Activated CD8-positive, alpha-beta T cell treated with anti-CD3 and anti-CD28 coated beads for 36 hours (primary cell): ENCODE measurements at regions of chr12 and their contacts with region 1.

Region 1: DNA sequence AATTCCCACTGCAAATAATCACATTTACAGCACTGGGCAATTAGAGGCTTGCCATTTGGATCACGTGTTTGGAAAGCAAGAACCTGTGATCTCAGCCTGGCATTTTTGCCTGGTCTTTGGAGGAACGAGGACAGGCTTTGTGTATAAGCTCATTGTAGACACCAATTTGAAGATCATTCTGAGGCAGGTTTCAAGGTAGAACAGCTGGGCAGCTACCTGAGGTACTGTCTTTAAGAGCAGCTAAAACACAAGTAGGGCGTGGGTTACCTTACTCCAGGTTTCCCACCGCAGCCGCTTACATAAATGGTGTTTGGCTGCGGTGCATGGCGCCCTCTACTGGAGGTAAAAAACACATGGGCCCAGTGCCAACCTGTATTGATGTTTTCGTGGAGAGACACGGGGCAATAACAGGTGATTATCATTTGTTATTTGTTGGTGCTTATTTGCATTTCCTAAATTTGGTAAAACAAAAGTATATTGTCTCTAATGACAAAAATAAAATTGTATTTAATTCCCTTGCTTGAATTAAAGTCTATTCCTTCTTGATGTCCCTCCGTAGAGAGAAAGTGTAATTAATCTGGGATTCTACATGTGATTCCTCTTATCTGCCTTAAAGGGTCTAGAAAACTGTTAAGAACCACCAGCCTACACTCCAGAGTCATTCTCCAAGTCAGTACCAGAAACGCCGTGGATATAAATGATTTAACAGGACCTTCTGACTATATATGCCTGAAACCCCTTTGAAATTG is 69.7 kb downstream of the SVOP start:
- DNase-seq: peak; percentile 83
- ATAC-seq: peak; percentile 90
- H3K4me3 Mint-ChIP-seq: no peak overlapping the region
- H3K27ac Mint-ChIP-seq: no peak overlapping the region
- H3K4me1 Mint-ChIP-seq: peaks cover 3% of the 10 kb centered on the region
- H3K27me3 Mint-ChIP-seq: peaks cover 4% of the 10 kb centered on the region
- CTCF ChIP-seq: peak; percentile 88

Region 2: DNA sequence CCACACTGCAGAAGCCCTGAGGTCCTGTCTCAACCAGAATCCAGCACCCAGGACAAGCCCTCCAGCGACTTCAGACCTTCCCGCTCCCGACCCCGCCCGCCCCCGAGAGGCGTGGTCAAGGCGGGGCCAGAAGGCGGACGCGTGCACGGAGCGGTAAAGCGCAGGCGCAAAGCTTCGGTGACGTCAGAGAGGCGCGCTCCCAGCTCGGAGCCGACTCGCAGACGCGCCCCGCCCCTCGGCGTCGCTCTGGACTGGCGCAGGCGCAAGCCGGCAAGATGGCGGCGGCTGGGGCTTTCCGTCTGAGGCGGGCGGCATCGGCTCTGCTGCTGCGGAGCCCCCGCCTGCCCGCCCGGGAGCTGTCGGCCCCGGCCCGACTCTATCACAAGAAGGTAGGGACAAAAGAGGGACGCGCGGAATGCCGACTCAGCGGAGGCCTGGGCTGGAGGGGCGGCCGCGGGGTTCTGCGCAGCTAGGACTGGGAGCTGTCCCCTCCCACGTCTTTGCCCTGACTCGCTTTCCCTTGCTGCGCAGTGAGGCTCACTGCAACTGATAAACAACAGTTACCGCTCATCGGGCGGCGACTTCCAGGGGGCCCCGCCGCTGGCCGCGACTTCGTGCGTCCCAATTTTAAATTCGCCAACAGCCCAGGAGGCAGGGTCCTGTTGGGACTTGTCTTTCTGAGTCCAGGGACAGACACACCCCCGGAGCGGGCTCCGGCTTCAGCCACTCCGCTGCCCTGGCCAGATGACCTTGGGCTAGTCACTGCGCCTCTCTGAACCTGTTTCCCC is 388.6 kb before region 1 on chr12 and contains the start of gene ISCU:
- CTCF ChIA-PET with region 1: interaction called, 8 read pairs
- POLR2A ChIA-PET with region 1: no interaction called
- intact Hi-C with region 1: loop called (anchors 10 kb)
- DNase-seq: peak; percentile 97
- ATAC-seq: peak; percentile 76
- H3K4me3 Mint-ChIP-seq: peak within 1 kb of the TSS; percentile 99
- H3K27ac Mint-ChIP-seq: peak within 1 kb of the TSS; percentile 100
- H3K4me1 Mint-ChIP-seq: peaks cover 55% of the 10 kb centered on the region
- H3K27me3 Mint-ChIP-seq: no peaks in the 10 kb centered on the region
- CTCF ChIP-seq: no peak
- total RNA-seq, gene ISCU: 69.4 to 70.5 TPM

Region 3: GRCh38 chr12:108773798-108774788 is 177.1 kb before region 1 on chr12:
- CTCF ChIA-PET with region 1: no interaction called
- POLR2A ChIA-PET with region 1: no interaction called
- intact Hi-C with region 1: no loop called
- DNase-seq: no peak
- ATAC-seq: no peak
- H3K4me3 Mint-ChIP-seq: no peak overlapping the region
- H3K27ac Mint-ChIP-seq: no peak overlapping the region
- H3K4me1 Mint-ChIP-seq: peaks cover 2% of the 10 kb centered on the region
- H3K27me3 Mint-ChIP-seq: peaks cover 2% of the 10 kb centered on the region
- CTCF ChIP-seq: no peak

Region 4: DNA sequence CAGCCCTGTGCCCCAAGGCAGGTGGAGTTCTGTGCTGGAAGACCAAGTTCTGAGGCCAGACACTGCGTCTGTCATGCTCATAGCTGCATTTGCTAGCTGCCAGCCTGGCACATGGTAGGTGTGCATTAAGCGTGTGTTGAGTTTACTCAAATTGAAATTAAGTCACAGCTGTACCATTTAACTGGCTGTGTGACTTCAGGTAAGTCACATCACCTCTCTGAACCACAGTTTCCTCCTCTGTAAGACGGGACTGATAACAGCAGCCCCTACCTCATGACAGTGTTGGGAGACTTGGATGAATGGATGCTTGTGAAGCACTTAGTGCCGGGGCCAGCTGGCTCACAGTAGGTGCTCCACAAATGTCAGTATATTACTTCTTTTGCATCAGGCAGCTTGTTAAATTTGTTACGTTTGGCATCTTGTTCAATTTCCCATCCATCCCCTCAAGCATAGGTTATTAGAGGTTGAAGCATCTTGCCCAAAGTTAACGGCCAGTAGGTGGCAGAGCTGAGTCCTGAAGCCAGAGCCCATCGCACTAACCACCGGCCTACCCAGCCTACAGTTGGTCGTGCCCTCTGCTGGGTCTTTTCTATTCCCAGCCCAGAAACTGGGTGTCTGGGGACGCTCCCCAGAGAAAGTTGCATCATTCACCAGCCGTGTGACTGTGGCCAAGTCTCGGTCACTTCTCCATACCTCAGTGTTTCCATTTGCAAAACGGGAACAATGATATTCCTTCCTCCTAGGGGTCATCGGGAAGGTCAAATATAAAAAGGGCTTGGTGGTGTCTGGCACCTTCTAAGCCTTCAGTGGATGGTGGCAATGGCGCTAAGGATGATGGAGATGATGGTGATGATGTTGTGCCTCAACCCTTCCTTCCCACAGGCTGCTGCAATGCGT is 66.8 kb before region 1 on chr12:
- CTCF ChIA-PET with region 1: interaction called, 35 read pairs
- POLR2A ChIA-PET with region 1: no interaction called
- intact Hi-C with region 1: loop called (anchors 2 kb)
- DNase-seq: peak; percentile 89
- ATAC-seq: peak; percentile 83
- H3K4me3 Mint-ChIP-seq: no peak overlapping the region
- H3K27ac Mint-ChIP-seq: no peak overlapping the region
- H3K4me1 Mint-ChIP-seq: no peaks in the 10 kb centered on the region
- H3K27me3 Mint-ChIP-seq: no peaks in the 10 kb centered on the region
- CTCF ChIP-seq: peak; percentile 70

Region 5: GRCh38 chr12:108939594-108939993 is 11.6 kb before region 1 on chr12:
- CTCF ChIA-PET with region 1: interaction called, 14 read pairs
- POLR2A ChIA-PET with region 1: no interaction called
- intact Hi-C with region 1: no loop called
- DNase-seq: peak; percentile 38
- ATAC-seq: peak; percentile 95
- H3K4me3 Mint-ChIP-seq: no peak overlapping the region
- H3K27ac Mint-ChIP-seq: no peak overlapping the region
- H3K4me1 Mint-ChIP-seq: peaks cover 6% of the 10 kb centered on the region
- H3K27me3 Mint-ChIP-seq: peaks cover 4% of the 10 kb centered on the region
- CTCF ChIP-seq: no peak

Region 6: GRCh38 chr12:108966378-108967151 is 15.4 kb after region 1 on chr12:
- CTCF ChIA-PET with region 1: interaction called, 10 read pairs
- POLR2A ChIA-PET with region 1: no interaction called
- intact Hi-C with region 1: no loop called
- DNase-seq: no peak
- ATAC-seq: no peak
- H3K4me3 Mint-ChIP-seq: no peak overlapping the region
- H3K27ac Mint-ChIP-seq: no peak overlapping the region
- H3K4me1 Mint-ChIP-seq: no peaks in the 10 kb centered on the region
- H3K27me3 Mint-ChIP-seq: peaks cover 5% of the 10 kb centered on the region
- CTCF ChIP-seq: no peak

Region 7: GRCh38 chr12:108989376-108989775 is 38.2 kb after region 1 on chr12:
- CTCF ChIA-PET with region 1: no interaction called
- POLR2A ChIA-PET with region 1: no interaction called
- intact Hi-C with region 1: no loop called
- DNase-seq: no peak
- ATAC-seq: no peak
- H3K4me3 Mint-ChIP-seq: no peak overlapping the region
- H3K27ac Mint-ChIP-seq: no peak overlapping the region
- H3K4me1 Mint-ChIP-seq: no peaks in the 10 kb centered on the region
- H3K27me3 Mint-ChIP-seq: no peaks in the 10 kb centered on the region
- CTCF ChIP-seq: no peak

Region 8: GRCh38 chr12:109052414-109053323 is 101.5 kb after region 1 on chr12 and contains the start of gene USP30:
- CTCF ChIA-PET with region 1: no interaction called
- POLR2A ChIA-PET with region 1: no interaction called
- intact Hi-C with region 1: no loop called
- DNase-seq: peak; percentile 87
- ATAC-seq: peak; percentile 76
- H3K4me3 Mint-ChIP-seq: peak within 1 kb of the TSS; percentile 81
- H3K27ac Mint-ChIP-seq: peak within 1 kb of the TSS; percentile 93
- H3K4me1 Mint-ChIP-seq: peaks cover 10% of the 10 kb centered on the region
- H3K27me3 Mint-ChIP-seq: no peaks in the 10 kb centered on the region
- CTCF ChIP-seq: no peak
- total RNA-seq, gene USP30: 7.4 to 10.0 TPM

Region 9: DNA sequence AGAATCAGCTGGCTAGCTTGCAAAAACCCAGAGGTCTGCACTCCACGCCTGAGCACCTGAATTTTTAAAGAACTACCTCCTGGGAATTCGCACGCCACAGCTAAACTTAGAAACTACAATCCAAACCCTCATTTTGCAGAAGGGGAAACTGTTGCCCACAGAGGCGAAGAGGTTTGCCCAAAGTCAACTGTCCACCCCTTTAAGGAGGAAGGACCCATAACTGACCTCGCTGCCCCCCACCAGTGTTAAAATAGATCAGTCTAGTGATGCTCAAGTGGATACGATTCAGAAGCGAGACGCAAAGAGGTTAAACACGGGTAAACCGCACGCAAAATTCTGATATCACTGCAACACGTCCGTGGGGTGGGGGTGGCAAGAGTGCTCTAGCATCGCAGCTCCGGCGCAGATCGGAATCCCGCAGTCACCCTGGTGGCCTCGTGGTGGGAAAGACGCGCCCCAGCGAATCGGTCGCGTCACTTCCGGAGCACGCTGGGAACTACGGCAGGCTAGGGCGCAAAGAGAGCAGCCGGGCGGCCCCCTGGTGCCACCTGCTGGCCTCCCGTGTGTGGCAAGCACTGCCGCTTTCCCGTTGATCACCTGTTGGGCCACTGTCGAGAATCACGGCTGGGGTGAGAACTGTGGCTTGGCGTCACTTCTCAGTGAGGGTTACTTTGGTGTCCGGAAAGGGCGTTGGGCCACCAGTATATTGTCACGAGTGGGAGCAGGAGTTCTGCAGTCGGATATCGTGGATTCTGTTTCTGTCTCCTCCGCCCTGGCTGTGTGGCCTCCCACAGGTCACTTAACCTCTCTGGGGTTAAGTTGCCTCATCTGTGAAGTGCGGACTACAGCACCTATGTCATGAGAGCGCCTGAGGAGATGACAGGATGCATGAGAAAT is 142.1 kb after region 1 on chr12 and contains the start of gene ALKBH2:
- CTCF ChIA-PET with region 1: interaction called, 11 read pairs
- POLR2A ChIA-PET with region 1: interaction called, 4 read pairs
- intact Hi-C with region 1: no loop called
- DNase-seq: peak; percentile 96
- ATAC-seq: peak; percentile 73
- H3K4me3 Mint-ChIP-seq: peak within 1 kb of the TSS; percentile 81
- H3K27ac Mint-ChIP-seq: peak within 1 kb of the TSS; percentile 91
- H3K4me1 Mint-ChIP-seq: peaks cover 36% of the 10 kb centered on the region
- H3K27me3 Mint-ChIP-seq: no peaks in the 10 kb centered on the region
- CTCF ChIP-seq: peak; percentile 92
- total RNA-seq, gene ALKBH2: 35.6 to 37.8 TPM